ENCODE measurements at regions of chr10 and their contacts with region 1.

Region 1: DNA sequence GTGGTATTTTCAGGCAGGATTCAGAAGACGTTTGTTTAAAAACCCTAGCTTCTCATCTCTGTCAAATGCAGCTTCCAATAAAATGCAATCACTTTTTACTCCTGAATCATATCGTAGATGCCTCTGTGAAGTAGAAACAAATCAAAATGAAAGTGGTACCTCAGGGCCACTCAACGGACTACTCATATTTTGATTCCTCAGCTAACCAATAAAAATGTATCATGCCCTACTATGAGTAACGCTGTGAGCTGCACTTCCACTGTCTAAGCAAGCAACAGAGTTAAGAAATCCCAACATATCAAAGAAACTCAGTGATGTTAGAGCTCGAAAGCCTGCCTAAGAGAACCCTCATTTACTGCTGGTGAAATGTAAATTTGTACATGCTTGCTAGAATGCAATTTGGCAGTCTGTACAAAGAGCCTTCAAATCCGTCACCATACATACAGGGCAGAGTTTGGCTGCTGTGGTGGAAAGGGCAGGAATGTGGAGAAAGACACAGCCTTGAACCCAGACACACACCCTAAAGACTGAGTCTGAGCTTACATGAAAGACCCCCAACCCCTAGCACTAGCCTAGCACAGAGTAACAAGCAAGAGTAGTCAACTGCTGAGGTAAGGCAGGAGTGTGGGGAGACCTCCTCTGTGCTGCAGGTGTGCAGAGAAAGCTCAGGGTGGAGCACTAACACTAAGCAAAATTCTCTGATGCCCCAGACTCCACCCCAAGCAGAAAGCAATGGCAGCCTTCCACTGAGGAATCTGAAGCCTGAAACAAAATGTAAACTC is 151.5 kb downstream of the ANK3 start:
- DNase-seq: peak in 2 of 4 experiments; percentile 60 to 62
- ATAC-seq: peak; percentile 99
- H3K4me3 ChIP-seq: no peak overlapping the region
- H3K27ac ChIP-seq: no peak overlapping the region
- H3K4me1 ChIP-seq: peaks cover 5 to 12% of the 10 kb centered on the region in 2 experiments; a peak in 2 of 5 replicates
- H3K27me3 ChIP-seq: no peaks in the 10 kb centered on the region
- CTCF ChIP-seq: peak; percentile 64 to 81 (median 76)
- EP300 ChIP-seq: no peak
- POLR2A ChIP-seq: no peak
- RAD21 ChIP-seq: peak; percentile 90 to 91

Region 2: GRCh38 chr10:60130130-60130579 is 108.0 kb before region 1 on chr10:
- CTCF ChIA-PET with region 1: no interaction called
- POLR2A ChIA-PET with region 1: no interaction called
- in situ Hi-C with region 1: no loop called
- intact Hi-C with region 1: no loop called
- DNase-seq: peak; percentile 62 to 90 (median 76)
- ATAC-seq: peak; percentile 99
- H3K4me3 ChIP-seq: no peak overlapping the region
- H3K27ac ChIP-seq: peak overlapping the region; percentile 79
- H3K4me1 ChIP-seq: peaks cover 0 to 33% of the 10 kb centered on the region in 2 experiments; a peak in 4 of 5 replicates
- H3K27me3 ChIP-seq: no peaks in the 10 kb centered on the region
- CTCF ChIP-seq: 0 out of 6 replicates have a peak, but pooled peaks of 1 of the 3 experiments have one; percentile 4
- EP300 ChIP-seq: no peak
- POLR2A ChIP-seq: peak; percentile 69
- RAD21 ChIP-seq: no peak

Region 3: DNA sequence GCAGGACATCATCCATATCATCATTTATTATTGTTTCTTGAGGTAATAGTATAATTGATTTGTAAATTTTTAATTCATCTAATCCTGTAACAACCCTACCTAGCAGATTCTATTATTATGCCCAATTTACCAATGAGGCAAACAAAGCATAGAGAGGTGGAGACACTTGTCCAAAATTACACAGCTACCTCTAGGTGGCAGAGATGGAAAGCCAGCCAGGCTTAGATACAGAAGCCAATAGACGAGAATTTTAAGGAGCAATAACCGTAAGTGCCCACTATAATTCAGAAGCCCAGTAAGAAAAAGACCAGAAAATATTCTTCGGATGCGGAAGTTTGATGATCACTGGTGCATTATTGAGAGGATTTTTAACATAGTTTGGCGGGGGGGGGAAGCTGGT is 97.5 kb after region 1 on chr10:
- CTCF ChIA-PET with region 1: no interaction called
- POLR2A ChIA-PET with region 1: no interaction called
- in situ Hi-C with region 1: no loop called
- intact Hi-C with region 1: loop called (anchors 5 kb)
- DNase-seq: peak in 1 of 4 experiments; percentile 56
- ATAC-seq: peak; percentile 88
- H3K4me3 ChIP-seq: no peak overlapping the region
- H3K27ac ChIP-seq: no peak overlapping the region
- H3K4me1 ChIP-seq: no peaks in the 10 kb centered on the region
- H3K27me3 ChIP-seq: no peaks in the 10 kb centered on the region
- CTCF ChIP-seq: peak; percentile 47 to 74 (median 55)
- EP300 ChIP-seq: no peak
- POLR2A ChIP-seq: no peak
- RAD21 ChIP-seq: peak; percentile 79 to 86

Region 4: GRCh38 chr10:60351191-60351853 is 113.2 kb after region 1 on chr10:
- CTCF ChIA-PET with region 1: no interaction called
- POLR2A ChIA-PET with region 1: no interaction called
- in situ Hi-C with region 1: no loop called
- intact Hi-C with region 1: loop called (anchors 5 kb)
- DNase-seq: no peak
- ATAC-seq: 0 out of 3 replicates have a peak, but pooled peaks have one; percentile 15
- H3K4me3 ChIP-seq: no peak overlapping the region
- H3K27ac ChIP-seq: no peak overlapping the region
- H3K4me1 ChIP-seq: peaks cover 5 to 67% of the 10 kb centered on the region in 2 experiments
- H3K27me3 ChIP-seq: no peaks in the 10 kb centered on the region
- CTCF ChIP-seq: no peak
- EP300 ChIP-seq: no peak
- POLR2A ChIP-seq: no peak
- RAD21 ChIP-seq: no peak

Region 5: DNA sequence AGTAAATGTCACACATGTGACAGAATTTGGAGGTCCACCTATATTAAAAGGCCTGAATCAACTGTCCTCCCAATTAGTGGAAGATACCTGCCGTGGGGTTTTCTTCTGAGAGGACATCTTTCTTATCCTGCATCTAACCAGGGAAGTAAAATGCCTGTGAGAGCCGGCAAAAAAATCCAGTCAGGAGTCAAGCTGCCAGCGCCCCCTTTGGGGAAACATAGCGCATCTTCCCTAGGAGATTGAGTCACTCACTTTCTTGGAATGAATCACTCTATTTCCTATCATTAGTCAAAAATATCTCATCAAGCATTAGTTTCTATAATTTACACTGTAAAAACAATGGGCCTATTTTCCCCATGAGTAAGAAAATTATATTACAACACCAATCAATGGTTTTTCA is 217.9 kb after region 1 on chr10:
- CTCF ChIA-PET with region 1: no interaction called
- POLR2A ChIA-PET with region 1: no interaction called
- in situ Hi-C with region 1: no loop called
- intact Hi-C with region 1: no loop called
- DNase-seq: peak in 2 of 4 experiments; percentile 27 to 34
- ATAC-seq: peak; percentile 64; the same call in 1 of the 3 replicates
- H3K4me3 ChIP-seq: no peak overlapping the region
- H3K27ac ChIP-seq: no peak overlapping the region
- H3K4me1 ChIP-seq: no peaks in the 10 kb centered on the region
- H3K27me3 ChIP-seq: peaks cover 6 to 11% of the 10 kb centered on the region in 2 experiments
- CTCF ChIP-seq: peak; percentile 35 to 53 (median 49)
- EP300 ChIP-seq: no peak
- POLR2A ChIP-seq: no peak
- RAD21 ChIP-seq: peak in 1 of 2 experiments; percentile 48; a peak in 2 of 4 replicates